ENCODE measurements at regions of chr1 and their contacts with region 1.

Region 1: DNA sequence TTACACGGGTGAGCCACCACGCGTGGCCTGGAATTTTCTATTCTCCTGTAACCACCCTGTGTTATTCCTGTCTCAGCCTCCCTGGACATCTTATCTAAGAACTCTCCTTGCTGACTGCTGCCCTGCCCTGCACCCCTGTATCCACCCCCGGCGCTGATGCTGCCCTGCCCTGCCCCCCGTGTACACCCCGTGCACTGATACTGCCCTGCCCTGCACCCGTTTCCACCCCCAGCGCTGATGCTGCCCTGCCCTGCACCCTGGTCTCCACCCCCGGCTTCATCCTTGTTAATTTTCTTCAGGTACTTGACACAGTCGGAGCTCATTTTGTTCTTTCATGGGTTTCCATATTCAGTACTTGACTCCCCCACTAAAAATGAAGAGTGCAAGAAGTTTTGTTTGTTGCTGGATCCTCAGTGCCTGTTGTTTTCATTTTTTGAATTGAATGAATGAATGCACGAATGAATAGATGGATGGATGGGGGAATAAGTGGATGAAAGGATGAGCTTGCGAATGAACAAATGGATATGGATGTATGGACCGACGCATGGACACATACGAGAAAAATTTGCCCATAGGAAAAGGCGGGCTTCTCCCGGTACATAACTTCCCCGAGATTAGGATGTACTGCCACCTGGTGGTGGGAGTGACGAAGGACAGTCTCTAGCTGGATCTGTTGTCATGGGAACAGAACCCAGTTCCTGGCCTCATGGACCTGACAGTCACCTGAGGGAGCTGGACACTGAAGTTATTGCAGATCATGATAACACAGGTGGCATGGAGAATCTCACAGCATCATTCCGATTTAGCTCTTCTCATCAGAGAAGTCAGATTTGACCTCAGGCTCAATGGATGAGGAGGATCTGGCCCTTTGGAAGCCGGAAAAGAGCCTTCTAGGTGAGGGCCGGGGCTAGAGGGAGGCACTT is 14.9 kb downstream of the AADACL4 start:
- DNase-seq: peak; percentile 80 to 82
- H3K4me3 ChIP-seq: no peak overlapping the region
- H3K27ac ChIP-seq: no peak overlapping the region
- H3K4me1 ChIP-seq: peaks cover 0 to 4% (median 1%) of the 10 kb centered on the region in 4 donors
- H3K27me3 ChIP-seq: no peaks in the 10 kb centered on the region
- CTCF ChIP-seq: peak; percentile 94 to 95

Region 2: GRCh38 chr1:12229835-12230548 is 428.8 kb before region 1 on chr1 and contains the start of gene VPS13D:
- intact Hi-C with region 1: loop called (anchors 10 kb)
- DNase-seq: peak; percentile 83 to 87
- H3K4me3 ChIP-seq: peak within 1 kb of the TSS; percentile 93 to 95
- H3K27ac ChIP-seq: peak within 1 kb of the TSS; percentile 90 to 95
- H3K4me1 ChIP-seq: peaks cover 0 to 25% (median 10%) of the 10 kb centered on the region in 4 donors
- H3K27me3 ChIP-seq: no peaks in the 10 kb centered on the region
- CTCF ChIP-seq: peak; percentile 95 to 98

Region 3: DNA sequence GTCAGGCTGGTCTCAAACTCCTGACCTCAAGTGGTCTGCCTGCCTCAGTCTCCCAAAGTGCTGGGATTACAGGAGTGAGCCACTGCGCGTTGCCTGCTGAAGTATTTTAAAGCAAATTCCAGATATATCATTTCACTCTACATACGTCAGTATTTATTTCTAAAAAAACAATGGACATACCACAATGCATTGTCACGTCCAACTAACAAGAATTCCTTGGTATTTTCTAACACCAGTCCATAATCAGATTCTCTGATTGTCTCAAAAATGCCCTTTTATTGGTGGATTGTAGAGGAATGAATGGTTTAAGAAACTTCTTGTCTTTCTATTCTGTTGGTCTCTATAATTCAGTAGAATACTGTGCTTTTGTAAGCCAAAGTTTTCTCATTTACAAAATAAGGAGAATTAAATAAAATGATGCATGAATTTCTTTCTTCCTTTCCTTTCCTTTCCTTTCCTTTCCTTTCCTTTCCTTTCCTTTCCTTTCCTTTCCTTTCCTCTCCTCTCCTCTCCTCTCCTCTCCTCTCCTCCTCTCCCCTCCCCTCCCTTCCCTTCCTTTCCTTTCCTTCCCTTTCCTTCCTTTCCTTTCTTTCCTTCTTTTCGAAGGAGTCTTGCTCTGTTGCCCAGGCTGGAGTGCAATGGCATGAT is 373.2 kb before region 1 on chr1:
- intact Hi-C with region 1: loop called (anchors 10 kb)
- DNase-seq: no peak
- H3K4me3 ChIP-seq: no peak overlapping the region
- H3K27ac ChIP-seq: no peak overlapping the region
- H3K4me1 ChIP-seq: no peaks in the 10 kb centered on the region
- H3K27me3 ChIP-seq: no peaks in the 10 kb centered on the region
- CTCF ChIP-seq: no peak

Region 4: DNA sequence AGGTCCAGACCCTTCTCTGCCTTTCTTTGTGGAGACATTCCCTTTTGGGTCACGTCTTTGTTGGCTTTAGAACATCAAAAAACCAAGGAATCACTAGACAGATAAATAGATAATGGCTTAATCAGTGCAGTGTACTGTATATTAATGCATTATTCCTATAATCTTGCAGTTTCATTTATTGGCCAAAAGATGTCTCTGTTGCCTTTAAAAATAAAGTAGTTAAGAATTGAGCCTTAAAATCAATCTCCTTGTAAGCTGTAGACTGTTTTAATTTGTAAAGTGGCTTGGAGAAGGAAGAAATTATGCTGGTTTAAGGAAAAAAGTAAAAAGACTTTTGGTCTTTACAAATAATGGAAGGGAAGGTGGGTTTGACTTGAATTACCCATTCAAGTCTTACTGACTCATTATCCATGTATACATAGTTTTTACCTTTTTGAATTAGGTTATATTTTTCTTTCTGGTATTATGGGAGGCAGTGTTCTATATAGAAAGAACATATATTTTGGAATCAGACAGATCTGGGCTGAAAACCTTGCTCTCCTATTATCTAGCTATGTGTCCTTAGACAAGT is 344.4 kb before region 1 on chr1:
- intact Hi-C with region 1: loop called (anchors 10 kb)
- DNase-seq: no peak
- H3K4me3 ChIP-seq: no peak overlapping the region
- H3K27ac ChIP-seq: peak overlapping the region; percentile 62 to 74
- H3K4me1 ChIP-seq: peaks cover 0 to 49% (median 34%) of the 10 kb centered on the region in 4 donors
- H3K27me3 ChIP-seq: no peaks in the 10 kb centered on the region
- CTCF ChIP-seq: peak; percentile 41 to 61